Psoas muscle (tissue), 8 donors: ENCODE measurements at regions of chr7 and their contacts with region 1.

Region 1: GRCh38 chr7:31014826-31015225 is 37.3 kb upstream of the ADCYAP1R1 start:
- DNase-seq: no peak
- ATAC-seq: no peak
- H3K4me3 ChIP-seq: no peak overlapping the region
- H3K27ac ChIP-seq: no peak overlapping the region
- H3K4me1 ChIP-seq: no peaks in the 10 kb centered on the region
- H3K27me3 ChIP-seq: peaks cover 0 to 4% (median 0%) of the 10 kb centered on the region in 3 donors
- CTCF ChIP-seq: no peak

Region 2: DNA sequence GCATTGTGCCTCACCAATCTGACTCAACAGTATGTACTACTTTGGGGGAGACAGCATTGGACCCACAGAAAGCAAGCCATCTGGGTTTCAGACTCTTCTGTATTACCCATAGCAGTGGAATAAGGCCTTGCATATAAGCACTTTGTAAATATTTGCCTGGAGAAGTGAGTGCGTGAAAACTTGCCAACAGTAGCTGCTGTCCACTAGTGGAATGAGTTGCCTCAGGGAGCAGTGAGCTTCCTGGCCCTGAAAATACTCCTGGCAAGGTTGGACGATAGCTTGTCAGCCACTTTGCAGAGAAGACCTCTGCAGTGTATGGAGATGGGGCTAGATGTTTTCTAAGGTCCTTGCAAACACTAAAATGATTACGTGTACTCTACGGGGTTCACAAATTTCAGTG is 398.5 kb before region 1 on chr7:
- intact Hi-C with region 1: no loop called
- DNase-seq: no peak
- ATAC-seq: no peak
- H3K4me3 ChIP-seq: no peak overlapping the region
- H3K27ac ChIP-seq: no peak overlapping the region
- H3K4me1 ChIP-seq: no peaks in the 10 kb centered on the region
- H3K27me3 ChIP-seq: no peaks in the 10 kb centered on the region
- CTCF ChIP-seq: no peak

Region 3: DNA sequence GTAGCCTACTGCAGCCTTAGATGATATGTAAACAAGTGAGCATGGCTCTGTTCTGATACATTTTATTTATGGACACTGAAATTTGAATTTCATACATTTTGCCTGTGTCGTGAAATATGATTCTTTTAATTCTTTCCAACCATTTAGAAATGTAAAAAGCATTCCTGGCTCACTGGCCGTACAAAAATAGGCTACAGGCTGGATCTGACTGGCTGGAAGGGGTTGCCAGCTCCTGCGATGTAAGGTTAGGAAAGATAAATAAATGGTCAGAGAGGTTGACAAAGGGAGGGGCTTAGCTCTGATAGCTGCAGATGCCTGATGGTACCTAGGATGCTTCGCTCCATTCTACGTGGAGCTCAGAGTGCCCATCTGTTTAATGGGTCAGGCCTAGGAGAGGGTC is 40.6 kb after region 1 on chr7:
- intact Hi-C with region 1: loop called in 1 of 2 experiments (anchors 2 kb)
- DNase-seq: no peak
- ATAC-seq: no peak
- H3K4me3 ChIP-seq: no peak overlapping the region
- H3K27ac ChIP-seq: no peak overlapping the region
- H3K4me1 ChIP-seq: no peaks in the 10 kb centered on the region
- H3K27me3 ChIP-seq: peaks cover 0 to 23% (median 16%) of the 10 kb centered on the region in 3 donors
- CTCF ChIP-seq: no peak